ENCODE measurements at regions of chr20 and their contacts with region 1.

Region 1: DNA sequence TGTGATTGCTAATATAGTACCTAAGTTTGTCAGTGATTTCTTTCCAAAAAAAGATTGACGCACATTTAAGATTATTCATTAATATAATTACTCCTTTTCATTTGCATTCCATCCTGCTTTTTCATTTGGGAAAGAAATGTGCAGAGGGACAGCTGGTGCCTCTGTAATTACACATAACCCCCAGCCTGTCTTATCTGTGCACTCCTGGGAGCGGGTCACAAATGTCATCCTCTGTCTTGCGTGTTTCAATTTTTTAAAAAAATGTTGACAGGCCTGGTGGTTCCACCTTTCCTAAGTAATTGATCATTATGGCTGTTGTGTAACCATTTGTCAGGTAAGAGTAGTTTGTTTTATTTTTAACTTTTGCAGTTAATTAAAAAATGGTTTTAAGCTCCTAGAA is 92.7 kb downstream of the SLX4IP start:
- DNase-seq: no peak
- H3K4me3 ChIP-seq: no peak overlapping the region
- H3K27ac ChIP-seq: no peak overlapping the region
- H3K4me1 ChIP-seq: peaks cover 3% of the 10 kb centered on the region
- H3K27me3 ChIP-seq: no peaks in the 10 kb centered on the region
- CTCF ChIP-seq: no peak
- POLR2A ChIP-seq: no peak

Region 2: GRCh38 chr20:10131612-10132345 is 396.0 kb before region 1 on chr20:
- CTCF ChIA-PET with region 1: no interaction called
- POLR2A ChIA-PET with region 1: no interaction called
- dilution Hi-C with region 1: no loop called
- intact Hi-C with region 1: no loop called
- DNase-seq: no peak
- H3K4me3 ChIP-seq: no peak overlapping the region
- H3K27ac ChIP-seq: no peak overlapping the region
- H3K4me1 ChIP-seq: no peaks in the 10 kb centered on the region
- H3K27me3 ChIP-seq: no peaks in the 10 kb centered on the region
- CTCF ChIP-seq: no peak
- POLR2A ChIP-seq: no peak

Region 3: DNA sequence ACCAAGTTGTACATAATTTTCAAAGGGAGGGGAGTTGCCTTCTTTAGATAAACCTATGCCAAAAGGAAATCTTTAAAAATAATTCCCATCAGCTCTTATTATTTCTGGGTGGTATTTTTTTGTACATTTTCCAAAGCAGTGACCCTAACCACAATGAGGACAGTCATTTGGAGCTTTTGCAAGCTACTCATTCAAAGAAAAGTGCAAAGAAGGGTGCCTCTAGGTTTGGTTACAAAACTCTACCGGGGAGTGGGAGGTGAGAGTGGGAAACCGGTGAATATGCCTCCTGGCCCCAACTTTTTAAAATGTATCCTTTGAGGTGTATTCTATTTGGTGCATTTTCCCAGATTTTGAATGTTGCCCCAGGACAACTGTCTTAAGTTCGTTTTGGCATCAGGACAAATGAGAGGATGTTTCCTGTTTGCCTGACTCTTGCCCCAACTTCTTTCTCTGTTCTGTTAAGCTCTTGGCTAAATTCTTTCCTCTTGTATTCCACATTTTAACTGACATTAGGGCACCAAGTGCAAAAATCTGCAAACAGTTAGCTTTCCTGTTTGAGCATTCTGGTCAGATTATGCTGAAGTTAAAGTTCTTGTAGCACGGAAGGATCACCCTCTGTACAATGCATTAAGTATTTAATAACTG is 13.7 kb before region 1 on chr20:
- CTCF ChIA-PET with region 1: interaction called, 14 read pairs
- POLR2A ChIA-PET with region 1: no interaction called
- dilution Hi-C with region 1: no loop called
- intact Hi-C with region 1: no loop called
- DNase-seq: peak; percentile 63
- H3K4me3 ChIP-seq: peak overlapping the region in 1 of 3 experiments; percentile 14
- H3K27ac ChIP-seq: no peak overlapping the region
- H3K4me1 ChIP-seq: peaks cover 26% of the 10 kb centered on the region
- H3K27me3 ChIP-seq: no peaks in the 10 kb centered on the region
- CTCF ChIP-seq: no peak
- POLR2A ChIP-seq: no peak

Region 4: DNA sequence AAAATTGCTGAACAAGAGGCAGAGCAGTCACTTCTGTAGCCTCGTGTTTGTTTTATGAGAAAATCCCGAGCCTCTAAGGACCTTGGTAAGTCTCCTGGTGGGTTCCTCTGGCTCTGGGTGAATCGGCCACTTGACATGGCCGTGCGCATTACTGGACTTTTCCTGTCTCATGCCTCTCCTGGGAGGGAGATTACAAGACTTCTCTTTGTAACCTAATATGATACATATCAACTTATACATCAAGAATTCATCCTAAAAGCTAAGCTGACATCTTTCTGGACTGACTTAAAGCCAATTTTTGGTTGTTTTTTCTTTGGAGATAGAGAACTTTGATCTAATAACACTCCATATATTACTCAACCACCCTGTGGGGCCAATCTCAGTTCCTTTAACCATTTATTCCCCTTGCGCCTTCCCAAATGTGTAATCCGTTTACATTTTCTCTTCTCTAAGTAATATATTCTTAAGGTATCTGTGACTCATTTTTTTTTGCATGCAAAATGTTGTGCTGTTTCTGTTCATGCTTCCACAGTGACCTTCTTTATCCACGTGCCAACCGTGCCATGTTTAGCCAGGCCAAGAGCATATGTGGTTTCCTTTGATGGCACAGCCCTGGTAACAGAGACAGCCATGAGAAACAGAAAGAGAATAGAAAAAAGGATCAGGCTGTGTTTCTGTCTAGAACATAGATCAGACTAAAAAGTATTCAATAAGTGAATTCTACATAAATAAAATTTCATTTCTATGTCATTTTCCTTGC is 193.5 kb after region 1 on chr20:
- CTCF ChIA-PET with region 1: no interaction called
- POLR2A ChIA-PET with region 1: no interaction called
- dilution Hi-C with region 1: no loop called
- intact Hi-C with region 1: no loop called
- DNase-seq: no peak
- H3K4me3 ChIP-seq: no peak overlapping the region
- H3K27ac ChIP-seq: no peak overlapping the region
- H3K4me1 ChIP-seq: peaks cover 11% of the 10 kb centered on the region
- H3K27me3 ChIP-seq: no peaks in the 10 kb centered on the region
- CTCF ChIP-seq: no peak
- POLR2A ChIP-seq: no peak